ENCODE measurements at regions of chr10 and their contacts with region 1.

Region 1: GRCh38 chr10:34666008-34666705 is 148.9 kb downstream of the PARD3 start:
- DNase-seq: peak; percentile 94
- ATAC-seq: peak; percentile 95
- H3K4me3 ChIP-seq: no peak overlapping the region
- H3K27ac ChIP-seq: no peak overlapping the region
- H3K4me1 ChIP-seq: peaks cover 3% of the 10 kb centered on the region; the same call in 1 of the 2 replicates
- H3K27me3 ChIP-seq: no peaks in the 10 kb centered on the region
- CTCF ChIP-seq: peak; percentile 84
- POLR2A ChIP-seq: no peak
- RAD21 ChIP-seq: peak; percentile 91

Region 2: GRCh38 chr10:34650156-34650555 is 16.0 kb before region 1 on chr10:
- CTCF ChIA-PET with region 1: no interaction called
- POLR2A ChIA-PET with region 1: no interaction called
- dilution Hi-C with region 1: no loop called
- in situ Hi-C with region 1: no loop called
- intact Hi-C with region 1: no loop called
- DNase-seq: no peak
- ATAC-seq: no peak
- H3K4me3 ChIP-seq: no peak overlapping the region
- H3K27ac ChIP-seq: no peak overlapping the region
- H3K4me1 ChIP-seq: no peaks in the 10 kb centered on the region; the same call in 1 of the 2 replicates
- H3K27me3 ChIP-seq: no peaks in the 10 kb centered on the region
- CTCF ChIP-seq: no peak
- POLR2A ChIP-seq: no peak
- RAD21 ChIP-seq: no peak

Region 3: DNA sequence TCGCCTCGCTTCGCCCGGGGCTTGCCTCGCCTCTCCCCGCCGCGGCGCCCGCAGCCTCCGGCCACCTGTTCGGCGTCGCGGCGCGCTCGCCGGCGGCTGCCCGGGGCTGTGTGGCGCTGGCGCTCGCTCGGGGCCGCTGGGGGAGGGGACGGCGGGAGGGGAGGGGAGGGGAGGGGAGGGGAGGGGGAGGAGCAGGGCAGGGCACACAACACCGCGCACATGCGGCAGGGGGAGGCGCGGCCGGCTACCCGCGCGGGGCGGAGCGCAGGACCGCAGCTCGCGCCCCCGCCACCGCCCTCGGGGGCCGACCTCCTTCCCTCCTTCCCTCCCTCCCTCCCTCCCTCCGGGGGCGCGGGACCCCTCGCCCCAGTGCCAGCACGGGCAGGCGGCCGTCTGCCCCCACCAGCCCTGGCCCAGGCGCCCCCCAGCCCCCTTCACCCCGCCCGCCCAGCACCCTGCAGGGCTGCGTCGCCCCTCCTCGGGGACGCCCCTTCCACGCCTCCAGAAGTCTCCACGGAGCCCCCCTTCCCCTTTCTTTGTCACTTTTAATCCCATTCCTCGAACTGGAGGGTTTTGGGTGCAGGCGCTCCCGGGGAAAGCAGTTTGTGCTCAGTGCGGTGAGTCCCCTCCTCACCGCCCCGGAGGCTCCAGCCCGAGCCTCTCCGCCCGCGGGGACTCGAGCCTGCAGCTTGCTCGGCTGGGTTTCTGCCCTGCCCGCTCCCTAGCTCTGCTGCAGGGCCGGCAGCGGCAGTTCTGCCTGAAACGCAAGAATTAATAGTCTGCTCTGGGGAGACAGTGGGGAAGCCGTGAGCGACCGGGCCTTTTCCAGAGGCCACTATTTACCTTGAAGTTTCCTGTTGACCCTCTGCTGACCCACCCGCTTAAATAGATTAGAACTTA is 149.3 kb after region 1 on chr10 and contains the start of gene PARD3:
- CTCF ChIA-PET with region 1: no interaction called
- POLR2A ChIA-PET with region 1: no interaction called
- dilution Hi-C with region 1: no loop called
- in situ Hi-C with region 1: no loop called
- intact Hi-C with region 1: loop called (anchors 2 kb)
- DNase-seq: peak; percentile 51
- ATAC-seq: peak; percentile 85
- H3K4me3 ChIP-seq: peak within 1 kb of the TSS; percentile 98
- H3K27ac ChIP-seq: peak within 1 kb of the TSS; percentile 93
- H3K4me1 ChIP-seq: peaks cover 4% of the 10 kb centered on the region
- H3K27me3 ChIP-seq: peaks cover 2% of the 10 kb centered on the region; the same call in 1 of the 2 replicates
- CTCF ChIP-seq: no peak
- POLR2A ChIP-seq: no peak
- RAD21 ChIP-seq: no peak
- total RNA-seq, gene PARD3: 34.2 and 37.5 TPM in 2 replicates

Region 4: DNA sequence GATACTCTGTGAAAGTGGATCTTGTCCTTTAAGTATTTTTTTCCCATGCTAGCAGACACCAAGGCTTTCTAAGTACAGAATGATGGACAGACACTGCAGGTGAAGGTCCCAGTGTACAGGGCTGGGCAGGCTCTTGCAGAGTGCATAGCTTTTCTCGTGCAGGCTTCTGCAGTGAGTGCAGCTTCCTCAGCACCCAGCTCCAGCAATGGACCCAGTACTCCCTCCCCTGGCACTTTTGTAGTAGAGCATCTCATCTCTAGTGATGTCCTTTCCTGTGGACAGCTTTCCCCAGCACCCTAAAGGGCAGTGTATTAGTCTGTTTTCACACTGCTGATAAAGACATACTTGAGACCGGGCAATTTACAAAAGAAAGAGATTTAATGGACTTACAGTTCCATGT is 319.7 kb after region 1 on chr10:
- CTCF ChIA-PET with region 1: no interaction called
- POLR2A ChIA-PET with region 1: no interaction called
- dilution Hi-C with region 1: no loop called
- in situ Hi-C with region 1: no loop called
- intact Hi-C with region 1: loop called (anchors 10 kb)
- DNase-seq: no peak
- ATAC-seq: peak; percentile 49; the same call in 1 of the 2 replicates
- H3K4me3 ChIP-seq: no peak overlapping the region
- H3K27ac ChIP-seq: no peak overlapping the region
- H3K4me1 ChIP-seq: no peaks in the 10 kb centered on the region
- H3K27me3 ChIP-seq: peaks cover 5% of the 10 kb centered on the region; the same call in 1 of the 2 replicates
- CTCF ChIP-seq: peak; percentile 37; the same call in 1 of the 2 replicates
- POLR2A ChIP-seq: no peak
- RAD21 ChIP-seq: peak; percentile 55

Region 5: GRCh38 chr10:35005868-35006267 is 339.7 kb after region 1 on chr10:
- CTCF ChIA-PET with region 1: no interaction called
- POLR2A ChIA-PET with region 1: no interaction called
- dilution Hi-C with region 1: no loop called
- in situ Hi-C with region 1: loop called (anchors 25 kb)
- intact Hi-C with region 1: no loop called
- DNase-seq: peak; percentile 98
- ATAC-seq: peak; percentile 74
- H3K4me3 ChIP-seq: no peak overlapping the region
- H3K27ac ChIP-seq: peak overlapping the region; percentile 10; the same call in 1 of the 2 replicates
- H3K4me1 ChIP-seq: peaks cover 6% of the 10 kb centered on the region
- H3K27me3 ChIP-seq: no peaks in the 10 kb centered on the region
- CTCF ChIP-seq: no peak
- POLR2A ChIP-seq: no peak
- RAD21 ChIP-seq: no peak

Region 6: DNA sequence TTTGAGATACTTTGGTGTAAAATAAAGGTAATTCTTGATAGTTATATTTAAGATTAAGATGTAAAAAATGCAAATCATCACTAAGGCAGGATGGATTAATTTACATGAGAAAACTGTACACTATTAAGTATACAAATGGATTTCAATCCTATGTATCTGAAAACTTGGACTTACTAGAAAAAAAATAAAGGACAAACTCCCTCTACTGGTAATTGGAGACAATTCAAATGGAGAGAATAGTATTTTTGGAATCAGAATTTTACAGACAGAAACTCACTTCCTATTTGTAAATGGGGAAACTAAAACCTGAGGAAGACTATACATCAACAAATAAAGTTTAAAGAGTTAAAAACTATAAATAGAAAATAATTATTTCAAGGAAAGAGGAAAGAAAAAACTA is 361.4 kb after region 1 on chr10:
- CTCF ChIA-PET with region 1: interaction called, 3 read pairs
- POLR2A ChIA-PET with region 1: no interaction called
- dilution Hi-C with region 1: no loop called
- in situ Hi-C with region 1: loop called (anchors 25 kb)
- intact Hi-C with region 1: loop called (anchors 1 kb)
- DNase-seq: peak; percentile 39
- ATAC-seq: 0 out of 2 replicates have a peak, but pooled peaks have one; percentile 24
- H3K4me3 ChIP-seq: no peak overlapping the region
- H3K27ac ChIP-seq: no peak overlapping the region
- H3K4me1 ChIP-seq: no peaks in the 10 kb centered on the region
- H3K27me3 ChIP-seq: no peaks in the 10 kb centered on the region
- CTCF ChIP-seq: peak; percentile 57
- POLR2A ChIP-seq: no peak
- RAD21 ChIP-seq: peak; percentile 48

Measured in IMR-90 (cell line).